Caco-2 (cell line): ENCODE measurements at regions of chr22 and their contacts with region 1.

Region 1: DNA sequence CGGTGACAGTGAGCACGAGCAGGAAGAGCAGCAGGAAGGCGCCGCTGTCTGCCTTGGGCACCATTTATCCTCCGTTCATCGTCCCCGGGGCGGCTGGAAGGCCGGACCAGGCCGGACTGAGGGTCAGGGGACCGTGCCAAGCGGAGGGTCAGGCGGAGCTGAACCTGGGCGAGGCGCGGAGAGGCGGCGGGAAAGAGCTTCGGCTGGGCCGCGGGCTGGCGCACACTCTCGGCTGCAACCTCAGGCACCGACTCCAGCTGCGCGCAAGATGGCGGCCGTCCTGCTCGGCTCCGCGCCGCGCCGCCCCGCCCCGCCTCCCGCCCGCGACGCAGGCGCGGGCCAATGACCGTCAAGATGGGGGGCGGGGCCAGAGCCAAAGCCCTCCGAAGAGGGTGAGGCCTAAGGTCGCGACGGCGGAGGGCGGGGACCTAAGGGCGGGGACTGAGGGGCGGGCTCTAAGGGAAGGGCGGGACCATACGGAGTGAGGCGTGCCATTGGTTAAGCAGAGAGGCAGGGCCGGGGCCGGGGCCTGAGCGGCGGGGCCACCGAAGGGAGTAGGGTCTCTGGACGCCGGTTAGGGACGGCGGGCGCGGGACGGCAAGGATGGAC is at the start of gene DGCR2:
- DNase-seq: peak; percentile 96
- H3K4me3 ChIP-seq: peak within 1 kb of the TSS; percentile 88
- H3K4me3 Mint-ChIP-seq: peak within 1 kb of the TSS; percentile 87
- H3K27ac Mint-ChIP-seq: peak within 1 kb of the TSS; percentile 71
- H3K4me1 ChIP-seq: peaks cover 16% of the 10 kb centered on the region
- H3K4me1 Mint-ChIP-seq: peaks cover 11% of the 10 kb centered on the region
- H3K27me3 ChIP-seq: no peaks in the 10 kb centered on the region
- H3K27me3 Mint-ChIP-seq: no peaks in the 10 kb centered on the region
- CTCF ChIP-seq: no peak
- total RNA-seq, gene DGCR2: 65.6 and 67.9 TPM in 2 replicates

Region 2: DNA sequence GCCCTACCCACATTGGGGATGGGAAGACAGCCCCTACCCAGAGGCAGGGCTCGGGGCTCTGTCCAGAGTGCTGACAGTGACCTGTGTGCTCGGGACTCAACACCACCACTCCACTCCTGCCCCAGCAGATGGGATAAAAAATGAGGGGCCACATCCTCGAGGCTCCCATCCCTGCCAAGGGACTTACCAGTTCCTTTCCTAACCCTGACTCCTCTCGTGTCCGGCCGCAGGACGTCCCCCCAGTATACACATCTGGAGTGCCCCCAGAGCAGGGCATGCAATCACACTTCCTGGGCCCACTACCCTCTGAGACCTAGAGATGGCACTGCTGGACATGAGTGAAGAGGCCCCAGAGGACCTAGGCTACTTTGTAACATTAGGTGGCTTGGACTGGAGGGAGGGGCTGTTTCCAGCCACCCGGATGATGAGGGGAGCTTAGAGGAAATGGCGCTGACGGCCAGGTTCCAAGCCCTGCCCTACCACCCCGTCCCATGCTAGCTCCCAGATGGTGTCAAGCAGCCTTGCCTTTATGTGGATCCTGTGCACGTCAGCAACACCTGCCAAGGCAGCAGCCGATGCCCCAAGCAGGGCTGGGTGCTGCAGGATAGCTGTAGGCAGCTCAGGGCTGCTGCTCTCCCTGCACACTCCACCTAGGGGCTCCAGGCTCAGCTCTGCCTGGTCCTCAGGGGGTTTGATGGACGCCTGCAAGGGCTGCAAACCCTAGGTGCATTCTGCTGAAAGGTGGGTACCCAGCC is 86.6 kb before region 1 on chr22:
- CTCF ChIA-PET with region 1: no interaction called
- POLR2A ChIA-PET with region 1: no interaction called
- intact Hi-C with region 1: no loop called
- DNase-seq: peak; percentile 34 to 45
- H3K4me3 ChIP-seq: no peak overlapping the region
- H3K4me3 Mint-ChIP-seq: no peak overlapping the region
- H3K27ac Mint-ChIP-seq: no peak overlapping the region
- H3K4me1 ChIP-seq: no peaks in the 10 kb centered on the region
- H3K4me1 Mint-ChIP-seq: no peaks in the 10 kb centered on the region
- H3K27me3 ChIP-seq: no peaks in the 10 kb centered on the region
- H3K27me3 Mint-ChIP-seq: no peaks in the 10 kb centered on the region
- CTCF ChIP-seq: peak in 1 of 2 experiments; percentile 8

Region 3: DNA sequence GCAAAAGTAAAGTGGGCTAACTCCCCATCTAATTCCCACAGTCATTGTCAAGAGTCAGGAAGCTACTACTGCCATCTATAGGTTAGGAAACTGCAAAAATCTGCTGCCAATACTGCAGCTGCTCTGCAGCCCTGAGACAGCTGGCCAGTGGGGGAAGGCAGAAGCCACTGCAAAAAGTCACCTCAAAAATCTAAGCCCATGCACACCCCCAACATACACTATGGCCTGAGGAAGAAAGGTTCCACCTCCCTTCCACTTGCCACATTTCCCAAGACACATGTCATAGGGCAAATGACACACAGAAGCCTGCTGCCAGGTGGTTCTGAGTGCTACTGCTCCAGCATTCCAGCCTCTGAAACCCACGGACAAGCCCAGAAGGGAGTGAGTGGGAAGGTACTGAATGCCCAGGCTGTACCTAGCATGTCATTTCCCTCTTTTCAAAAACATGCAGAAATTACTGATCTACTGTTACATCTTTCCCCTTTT is 37.0 kb before region 1 on chr22:
- CTCF ChIA-PET with region 1: no interaction called
- POLR2A ChIA-PET with region 1: no interaction called
- intact Hi-C with region 1: no loop called
- DNase-seq: peak in 1 of 2 experiments; percentile 24
- H3K4me3 ChIP-seq: no peak overlapping the region
- H3K4me3 Mint-ChIP-seq: no peak overlapping the region
- H3K27ac Mint-ChIP-seq: no peak overlapping the region
- H3K4me1 ChIP-seq: no peaks in the 10 kb centered on the region
- H3K4me1 Mint-ChIP-seq: no peaks in the 10 kb centered on the region
- H3K27me3 ChIP-seq: no peaks in the 10 kb centered on the region
- H3K27me3 Mint-ChIP-seq: no peaks in the 10 kb centered on the region
- CTCF ChIP-seq: peak; percentile 35 to 38

Region 4: DNA sequence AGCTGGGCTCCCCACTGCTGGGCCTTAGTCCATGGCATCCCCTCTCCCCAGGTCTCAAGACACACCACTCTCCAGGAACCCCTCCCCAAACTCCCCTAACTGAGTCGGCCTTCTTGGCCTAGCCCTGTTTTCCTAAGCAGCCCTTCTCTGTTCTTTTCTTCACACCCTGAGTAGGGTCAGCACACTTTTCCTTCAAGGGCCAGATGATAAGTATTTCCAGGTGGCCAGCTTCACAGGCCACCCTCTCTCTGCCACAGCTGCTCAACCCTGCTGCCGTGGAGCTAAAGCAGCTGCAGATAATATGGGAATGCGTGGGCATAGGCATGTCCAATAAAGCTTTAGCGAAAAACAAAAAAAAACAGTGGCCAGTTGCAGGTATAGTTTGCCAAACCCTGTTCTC is 24.1 kb before region 1 on chr22:
- CTCF ChIA-PET with region 1: no interaction called
- POLR2A ChIA-PET with region 1: no interaction called
- intact Hi-C with region 1: no loop called
- DNase-seq: no peak
- H3K4me3 ChIP-seq: no peak overlapping the region
- H3K4me3 Mint-ChIP-seq: no peak overlapping the region
- H3K27ac Mint-ChIP-seq: no peak overlapping the region
- H3K4me1 ChIP-seq: no peaks in the 10 kb centered on the region
- H3K4me1 Mint-ChIP-seq: no peaks in the 10 kb centered on the region
- H3K27me3 ChIP-seq: no peaks in the 10 kb centered on the region
- H3K27me3 Mint-ChIP-seq: no peaks in the 10 kb centered on the region
- CTCF ChIP-seq: no peak

Region 5: DNA sequence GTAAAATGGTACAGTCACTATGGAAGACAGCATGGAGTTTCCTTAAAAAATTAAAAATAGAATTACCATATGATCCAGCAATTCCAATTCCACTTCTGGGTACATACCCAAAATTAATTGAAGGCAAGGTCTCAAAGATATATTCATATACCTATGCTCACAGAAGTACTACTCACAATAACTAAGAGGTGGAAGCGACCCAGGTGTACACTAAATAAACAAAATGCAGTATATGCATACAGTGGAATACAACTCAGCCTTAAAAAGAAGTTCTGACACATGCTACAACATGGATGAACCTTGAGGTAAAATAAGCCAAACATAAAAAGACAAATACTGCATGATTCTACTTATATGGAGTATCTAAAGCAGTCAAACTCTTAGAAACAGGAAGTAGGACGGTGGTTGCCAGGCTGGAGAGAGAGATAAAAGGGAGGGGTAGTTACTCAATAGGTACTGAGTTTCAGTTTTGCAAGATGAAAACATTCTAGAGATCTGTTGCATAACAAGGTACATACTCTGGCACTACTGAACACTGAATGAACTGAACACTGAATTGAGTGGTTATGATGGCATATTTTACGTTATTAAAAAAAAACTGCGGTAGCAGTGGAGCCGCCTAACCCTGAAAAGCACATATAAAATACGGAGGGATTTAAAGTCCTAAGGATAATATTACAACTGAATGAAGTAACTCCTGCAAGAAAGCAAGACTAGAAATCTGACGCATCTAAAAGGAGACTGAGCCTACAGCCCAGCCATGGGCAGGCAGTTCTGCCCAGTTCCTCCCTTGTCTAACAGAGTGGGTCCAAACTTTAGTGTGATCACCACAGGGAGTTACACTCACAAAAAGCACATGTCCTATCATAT is 12.8 kb before region 1 on chr22:
- CTCF ChIA-PET with region 1: interaction called, 3 read pairs
- POLR2A ChIA-PET with region 1: no interaction called
- intact Hi-C with region 1: loop called (anchors 1 kb)
- DNase-seq: peak in 1 of 2 experiments; percentile 37
- H3K4me3 ChIP-seq: no peak overlapping the region
- H3K4me3 Mint-ChIP-seq: no peak overlapping the region
- H3K27ac Mint-ChIP-seq: no peak overlapping the region
- H3K4me1 ChIP-seq: peaks cover 9% of the 10 kb centered on the region; the same call in 1 of the 2 replicates
- H3K4me1 Mint-ChIP-seq: peaks cover 5% of the 10 kb centered on the region
- H3K27me3 ChIP-seq: no peaks in the 10 kb centered on the region
- H3K27me3 Mint-ChIP-seq: no peaks in the 10 kb centered on the region
- CTCF ChIP-seq: no peak

Region 6: DNA sequence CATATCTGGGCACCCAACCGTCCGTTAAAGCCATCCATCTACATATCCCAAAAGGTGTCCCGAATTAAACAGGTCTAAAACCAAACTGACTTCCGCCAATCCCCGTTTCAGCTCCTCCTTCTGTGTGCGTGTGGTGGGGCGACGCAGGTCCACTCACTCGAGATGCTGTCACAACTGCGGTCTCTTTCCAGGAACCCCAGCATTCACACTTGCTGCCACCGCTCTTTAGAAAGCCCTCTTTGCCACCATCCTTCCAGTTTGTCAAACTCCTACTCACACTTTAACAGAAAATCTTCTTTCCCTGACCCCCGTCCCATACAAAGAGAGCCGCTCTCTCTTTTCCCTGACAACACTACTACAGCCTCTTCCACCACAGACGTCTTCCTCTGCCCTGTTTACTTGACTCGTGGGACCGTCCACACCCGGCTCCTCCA is 21.7 kb after region 1 on chr22:
- CTCF ChIA-PET with region 1: interaction called, 8 read pairs
- POLR2A ChIA-PET with region 1: interaction called, 11 read pairs
- intact Hi-C with region 1: no loop called
- DNase-seq: no peak
- H3K4me3 ChIP-seq: peak overlapping the region; percentile 81
- H3K4me3 Mint-ChIP-seq: peak overlapping the region; percentile 97
- H3K27ac Mint-ChIP-seq: peak overlapping the region; percentile 92
- H3K4me1 ChIP-seq: peaks cover 4% of the 10 kb centered on the region; the same call in 1 of the 2 replicates
- H3K4me1 Mint-ChIP-seq: peaks cover 8% of the 10 kb centered on the region
- H3K27me3 ChIP-seq: no peaks in the 10 kb centered on the region
- H3K27me3 Mint-ChIP-seq: peaks cover 4% of the 10 kb centered on the region
- CTCF ChIP-seq: no peak

Region 7: GRCh38 chr22:19291580-19292457 is 169.6 kb after region 1 on chr22 and contains the start of gene CLTCL1:
- CTCF ChIA-PET with region 1: no interaction called
- POLR2A ChIA-PET with region 1: no interaction called
- intact Hi-C with region 1: no loop called
- DNase-seq: peak; percentile 82 to 91
- H3K4me3 ChIP-seq: peak within 1 kb of the TSS; percentile 89
- H3K4me3 Mint-ChIP-seq: peak within 1 kb of the TSS; percentile 82
- H3K27ac Mint-ChIP-seq: peak within 1 kb of the TSS; percentile 42
- H3K4me1 ChIP-seq: no peaks in the 10 kb centered on the region
- H3K4me1 Mint-ChIP-seq: peaks cover 4% of the 10 kb centered on the region
- H3K27me3 ChIP-seq: no peaks in the 10 kb centered on the region
- H3K27me3 Mint-ChIP-seq: no peaks in the 10 kb centered on the region
- CTCF ChIP-seq: no peak
- total RNA-seq, gene CLTCL1: 7.8 and 7.9 TPM in 2 replicates